Right ventricle myocardium inferior (tissue), 1 donor: ENCODE measurements at regions of chr18 and their contacts with region 1.

Region 1: GRCh38 chr18:12890506-12890905 is 6.5 kb upstream of the PTPN2 start:
- DNase-seq: no peak
- ATAC-seq: no peak

Region 2: GRCh38 chr18:12744103-12744502 is 146.4 kb before region 1 on chr18:
- intact Hi-C with region 1: loop called (anchors 2 kb)
- DNase-seq: no peak
- ATAC-seq: no peak

Region 3: DNA sequence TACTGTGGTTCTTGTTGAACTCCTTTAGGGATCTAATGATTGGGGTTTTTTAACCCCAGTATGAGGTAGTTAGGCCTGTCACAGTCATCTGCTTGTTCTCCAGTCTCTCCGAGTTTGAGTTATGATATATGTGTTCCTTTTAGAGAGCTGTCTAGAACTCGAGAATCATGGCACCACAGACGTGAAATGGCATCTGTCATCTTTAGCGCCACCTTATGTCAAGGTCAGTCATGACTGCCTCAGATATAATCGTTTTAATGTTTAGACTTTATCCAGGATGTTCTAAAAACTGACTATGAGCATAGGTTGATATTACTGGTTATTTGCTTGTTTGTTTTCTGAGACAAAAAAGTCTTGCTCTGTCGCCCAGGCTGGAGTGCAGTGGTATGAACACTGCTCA is 212.9 kb after region 1 on chr18:
- intact Hi-C with region 1: no loop called
- DNase-seq: no peak
- ATAC-seq: no peak